ENCODE measurements at regions of chr20 and their contacts with region 1.

Region 1: GRCh38 chr20:45322952-45323383 is 14.9 kb upstream of the MATN4 start:
- DNase-seq: peak; percentile 63
- CTCF ChIP-seq: peak; percentile 15

Region 2: GRCh38 chr20:45300961-45301360 is 22.0 kb before region 1 on chr20:
- CTCF ChIA-PET with region 1: interaction called, 32 read pairs
- POLR2A ChIA-PET with region 1: no interaction called
- DNase-seq: peak; percentile 48
- CTCF ChIP-seq: peak; percentile 41

Region 3: GRCh38 chr20:45337367-45338120 is 14.6 kb after region 1 on chr20:
- CTCF ChIA-PET with region 1: interaction called, 18 read pairs
- POLR2A ChIA-PET with region 1: no interaction called
- DNase-seq: no peak
- CTCF ChIP-seq: no peak

Region 4: GRCh38 chr20:45487231-45487635 is 164.3 kb after region 1 on chr20:
- CTCF ChIA-PET with region 1: interaction called, 10 read pairs
- POLR2A ChIA-PET with region 1: no interaction called
- DNase-seq: no peak
- CTCF ChIP-seq: no peak